Activated CD8-positive, alpha-beta T cell treated with anti-CD3 and anti-CD28 coated beads, Interleukin-2, amount 10 ng/mL, durations not matched to agents 7 days and 5 days (primary cell): ENCODE measurements at regions of chr10 and their contacts with region 1.

Region 1: DNA sequence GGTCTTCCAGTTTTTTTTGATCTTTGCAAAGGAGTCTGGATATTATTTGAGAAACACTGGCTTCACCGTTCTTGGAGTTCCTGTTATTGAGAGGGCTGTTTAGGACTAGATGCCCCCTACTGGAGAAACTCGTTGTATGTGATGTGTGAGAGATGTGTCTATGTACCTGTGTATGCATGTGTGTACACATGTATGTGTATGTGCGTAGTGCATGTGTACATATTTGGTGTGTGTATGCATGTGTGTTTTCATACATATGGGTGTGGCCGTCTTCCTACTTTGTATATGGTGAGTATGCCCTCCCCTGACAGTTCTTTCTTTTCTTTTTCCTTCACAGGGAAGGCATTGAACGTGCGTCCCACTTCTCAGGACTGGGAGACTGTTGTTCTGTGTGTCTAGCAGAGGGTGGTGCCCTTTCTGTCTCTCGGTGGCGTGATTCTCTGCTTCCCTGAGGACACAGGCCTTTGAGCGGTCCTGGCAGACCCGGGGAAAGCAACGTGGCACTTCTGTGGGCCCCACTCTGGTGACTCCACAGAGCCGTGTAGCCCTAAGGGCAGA is 3.0 kb upstream of the CALHM3 start:
- DNase-seq: peak; percentile 75
- ATAC-seq: peak; percentile 89
- H3K4me3 Mint-ChIP-seq: no peak overlapping the region
- H3K27ac Mint-ChIP-seq: peak overlapping the region; percentile 30
- H3K4me1 Mint-ChIP-seq: peaks cover 34% of the 10 kb centered on the region
- H3K27me3 Mint-ChIP-seq: peaks cover 3% of the 10 kb centered on the region

Region 2: GRCh38 chr10:103396064-103396788 is 85.8 kb before region 1 on chr10 and contains the starts of genes ATP5MK and PDCD11:
- CTCF ChIA-PET with region 1: interaction called, 11 read pairs
- POLR2A ChIA-PET with region 1: no interaction called
- DNase-seq: peak; percentile 98
- ATAC-seq: peak; percentile 99
- H3K4me3 Mint-ChIP-seq: peak within 1 kb of the TSS; percentile 93
- H3K27ac Mint-ChIP-seq: peak within 1 kb of the TSS; percentile 94
- H3K4me1 Mint-ChIP-seq: peaks cover 48% of the 10 kb centered on the region
- H3K27me3 Mint-ChIP-seq: no peaks in the 10 kb centered on the region
- total RNA-seq, gene ATP5MK: 360 to 363 TPM
- total RNA-seq, gene PDCD11: 57.1 to 57.4 TPM

Region 3: GRCh38 chr10:103416436-103417147 is 65.5 kb before region 1 on chr10:
- CTCF ChIA-PET with region 1: interaction called, 148 read pairs
- POLR2A ChIA-PET with region 1: no interaction called
- DNase-seq: peak; percentile 84
- ATAC-seq: peak; percentile 76
- H3K4me3 Mint-ChIP-seq: no peak overlapping the region
- H3K27ac Mint-ChIP-seq: peak overlapping the region; percentile 27
- H3K4me1 Mint-ChIP-seq: peaks cover 11% of the 10 kb centered on the region
- H3K27me3 Mint-ChIP-seq: no peaks in the 10 kb centered on the region

Region 4: DNA sequence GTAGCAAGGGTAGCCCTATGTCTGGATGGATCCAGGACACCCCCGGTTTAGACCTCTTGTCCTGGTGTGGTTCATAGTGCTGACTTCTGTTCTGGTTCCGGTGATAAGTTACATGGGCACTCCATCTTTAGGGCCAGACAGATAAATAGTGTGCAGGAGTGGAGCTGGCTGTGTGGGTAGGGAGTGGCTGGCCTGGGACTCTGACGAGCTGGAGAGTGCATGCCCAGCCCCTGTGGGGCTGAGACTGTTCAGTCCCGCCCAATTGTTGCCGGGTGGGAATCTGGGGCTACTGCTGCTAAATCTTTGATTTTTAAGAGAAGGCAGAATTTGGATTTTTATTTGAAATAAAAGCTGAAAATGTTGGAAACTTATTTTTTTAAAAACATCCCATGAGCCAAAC is 58.3 kb before region 1 on chr10:
- CTCF ChIA-PET with region 1: interaction called, 148 read pairs
- POLR2A ChIA-PET with region 1: no interaction called
- DNase-seq: no peak
- ATAC-seq: no peak
- H3K4me3 Mint-ChIP-seq: no peak overlapping the region
- H3K27ac Mint-ChIP-seq: no peak overlapping the region
- H3K4me1 Mint-ChIP-seq: peaks cover 19% of the 10 kb centered on the region
- H3K27me3 Mint-ChIP-seq: no peaks in the 10 kb centered on the region

Region 5: DNA sequence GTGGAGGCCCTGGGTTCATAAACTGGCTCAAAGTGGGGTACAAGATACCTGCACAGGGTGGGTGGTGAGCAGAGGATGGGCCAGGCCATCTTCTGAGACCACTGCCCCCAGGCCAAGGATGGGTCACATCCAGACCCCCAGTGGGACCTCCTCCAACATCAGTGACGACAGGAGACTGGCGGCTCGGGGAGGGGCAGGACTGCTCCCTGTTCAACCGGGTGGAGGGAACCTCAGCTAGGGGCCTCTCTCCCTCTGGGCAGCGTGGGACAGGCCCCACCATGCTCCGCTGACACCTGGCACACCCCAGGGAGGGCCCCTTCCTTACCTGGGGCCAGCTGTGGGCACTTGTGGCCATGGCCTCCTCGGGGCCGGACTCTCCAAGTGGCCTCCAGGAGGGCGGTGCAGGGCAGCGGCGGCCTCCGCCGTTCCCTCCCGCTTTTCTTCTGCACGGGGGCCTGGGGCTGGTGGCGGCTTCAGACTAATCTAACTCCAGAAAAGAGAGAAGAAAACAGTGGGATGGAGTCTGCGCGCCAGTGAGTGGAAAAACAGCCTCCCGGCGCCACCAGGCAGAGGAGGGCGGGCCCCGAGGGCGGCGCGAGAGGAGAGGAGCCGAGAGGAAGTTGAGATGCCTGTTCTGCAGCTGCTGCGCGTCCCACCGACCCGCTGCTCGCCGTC is 30.1 kb before region 1 on chr10 and contains the start of gene CALHM2:
- CTCF ChIA-PET with region 1: interaction called, 54 read pairs
- POLR2A ChIA-PET with region 1: interaction called, 19 read pairs
- DNase-seq: peak; percentile 74
- ATAC-seq: peak; percentile 78
- H3K4me3 Mint-ChIP-seq: peak within 1 kb of the TSS; percentile 98
- H3K27ac Mint-ChIP-seq: peak within 1 kb of the TSS; percentile 92
- H3K4me1 Mint-ChIP-seq: peaks cover 71% of the 10 kb centered on the region
- H3K27me3 Mint-ChIP-seq: no peaks in the 10 kb centered on the region
- total RNA-seq, gene CALHM2: 131 to 135 TPM

Region 6: GRCh38 chr10:103470761-103471653 is 11.0 kb before region 1 on chr10:
- CTCF ChIA-PET with region 1: interaction called, 18 read pairs
- POLR2A ChIA-PET with region 1: no interaction called
- DNase-seq: peak; percentile 96
- ATAC-seq: peak; percentile 84
- H3K4me3 Mint-ChIP-seq: peak overlapping the region; percentile 74
- H3K27ac Mint-ChIP-seq: peak overlapping the region; percentile 95
- H3K4me1 Mint-ChIP-seq: peaks cover 84% of the 10 kb centered on the region
- H3K27me3 Mint-ChIP-seq: no peaks in the 10 kb centered on the region

Region 7: GRCh38 chr10:103499881-103500280 is 17.8 kb after region 1 on chr10:
- CTCF ChIA-PET with region 1: interaction called, 14 read pairs
- POLR2A ChIA-PET with region 1: no interaction called
- DNase-seq: no peak
- ATAC-seq: no peak
- H3K4me3 Mint-ChIP-seq: no peak overlapping the region
- H3K27ac Mint-ChIP-seq: no peak overlapping the region
- H3K4me1 Mint-ChIP-seq: peaks cover 14% of the 10 kb centered on the region
- H3K27me3 Mint-ChIP-seq: peaks cover 64% of the 10 kb centered on the region

Region 8: DNA sequence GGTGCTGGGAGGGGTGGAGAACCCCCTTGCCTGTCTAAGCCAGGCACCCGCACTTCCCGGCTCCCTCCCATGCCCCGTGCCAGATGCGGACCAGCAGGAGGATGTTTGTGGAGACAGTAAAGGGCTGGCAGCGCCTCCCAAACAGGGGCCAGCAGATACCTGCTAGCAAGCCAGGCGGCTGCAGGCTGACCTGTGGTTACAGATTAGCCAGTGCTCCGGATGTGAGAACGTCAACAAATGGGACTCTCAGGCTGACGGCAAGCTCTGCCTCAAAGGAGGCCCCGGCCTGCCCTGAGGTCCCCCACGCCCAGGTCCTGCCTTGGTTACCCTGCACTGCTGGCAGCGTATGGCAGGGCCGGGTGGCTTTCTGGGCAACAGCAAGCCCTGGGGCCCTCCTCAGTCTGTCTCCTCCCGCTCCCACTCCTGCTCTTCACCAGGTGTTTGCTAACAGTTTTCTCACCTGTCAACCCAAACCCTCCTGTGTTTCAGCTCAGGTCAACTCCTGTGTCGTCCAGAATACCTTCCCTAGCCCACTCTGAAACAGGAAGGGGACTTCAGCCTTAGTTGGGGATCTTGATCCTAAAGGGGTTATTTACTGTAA is 96.8 kb after region 1 on chr10:
- CTCF ChIA-PET with region 1: no interaction called
- POLR2A ChIA-PET with region 1: no interaction called
- DNase-seq: no peak
- ATAC-seq: no peak
- H3K4me3 Mint-ChIP-seq: no peak overlapping the region
- H3K27ac Mint-ChIP-seq: no peak overlapping the region
- H3K4me1 Mint-ChIP-seq: peaks cover 9% of the 10 kb centered on the region
- H3K27me3 Mint-ChIP-seq: peaks cover 8% of the 10 kb centered on the region

Region 9: DNA sequence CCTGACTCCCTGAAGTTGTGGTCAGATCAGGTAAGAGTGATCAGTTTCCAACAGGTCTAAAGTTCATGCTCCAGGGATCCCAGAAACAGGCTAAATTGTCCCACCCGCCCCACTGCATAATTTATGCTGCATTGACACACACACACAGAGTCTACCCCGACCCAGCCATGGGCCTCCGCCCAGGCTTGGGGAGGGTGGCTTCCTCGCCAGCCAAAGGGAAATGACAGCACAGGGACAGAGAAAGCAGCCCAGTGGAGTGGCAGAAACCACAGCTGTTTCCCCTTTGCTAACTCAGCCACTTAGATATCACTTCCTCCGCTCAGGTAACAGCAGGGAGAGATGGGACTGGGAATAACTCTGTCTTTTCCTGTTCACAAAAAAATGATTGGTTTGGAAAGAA is 363.9 kb after region 1 on chr10:
- CTCF ChIA-PET with region 1: no interaction called
- POLR2A ChIA-PET with region 1: no interaction called
- DNase-seq: peak; percentile 62
- ATAC-seq: peak; percentile 88
- H3K4me3 Mint-ChIP-seq: peak overlapping the region; percentile 28
- H3K27ac Mint-ChIP-seq: peak overlapping the region; percentile 72
- H3K4me1 Mint-ChIP-seq: peaks cover 23% of the 10 kb centered on the region
- H3K27me3 Mint-ChIP-seq: peaks cover 15% of the 10 kb centered on the region